GM12878 (cell line): ENCODE measurements at regions of chr6 and their contacts with region 1.

Region 1: GRCh38 chr6:9638861-9639260 is 776.0 kb downstream of the TFAP2A start:
- DNase-seq: no peak
- ATAC-seq: no peak
- H3K4me3 ChIP-seq: no peak overlapping the region
- H3K27ac ChIP-seq: no peak overlapping the region
- H3K4me1 ChIP-seq: no peaks in the 10 kb centered on the region
- H3K27me3 ChIP-seq: no peaks in the 10 kb centered on the region
- CTCF ChIP-seq: no peak
- EP300 ChIP-seq: no peak
- POLR2A ChIP-seq: no peak
- RAD21 ChIP-seq: no peak

Region 2: GRCh38 chr6:9623985-9624384 is 14.9 kb before region 1 on chr6:
- CTCF ChIA-PET with region 1: interaction called, 4 read pairs
- POLR2A ChIA-PET with region 1: no interaction called
- RAD21 ChIA-PET with region 1: interaction called, 3 read pairs
- SMC1A ChIA-PET with region 1: interaction called, 15 read pairs
- in situ Hi-C with region 1: no loop called
- intact Hi-C with region 1: no loop called
- DNase-seq: no peak
- ATAC-seq: no peak
- H3K4me3 ChIP-seq: no peak overlapping the region
- H3K27ac ChIP-seq: no peak overlapping the region
- H3K4me1 ChIP-seq: no peaks in the 10 kb centered on the region
- H3K27me3 ChIP-seq: no peaks in the 10 kb centered on the region
- CTCF ChIP-seq: no peak
- EP300 ChIP-seq: no peak
- POLR2A ChIP-seq: no peak
- RAD21 ChIP-seq: no peak